ENCODE measurements at regions of chr22 and their contacts with region 1.

Region 1: DNA sequence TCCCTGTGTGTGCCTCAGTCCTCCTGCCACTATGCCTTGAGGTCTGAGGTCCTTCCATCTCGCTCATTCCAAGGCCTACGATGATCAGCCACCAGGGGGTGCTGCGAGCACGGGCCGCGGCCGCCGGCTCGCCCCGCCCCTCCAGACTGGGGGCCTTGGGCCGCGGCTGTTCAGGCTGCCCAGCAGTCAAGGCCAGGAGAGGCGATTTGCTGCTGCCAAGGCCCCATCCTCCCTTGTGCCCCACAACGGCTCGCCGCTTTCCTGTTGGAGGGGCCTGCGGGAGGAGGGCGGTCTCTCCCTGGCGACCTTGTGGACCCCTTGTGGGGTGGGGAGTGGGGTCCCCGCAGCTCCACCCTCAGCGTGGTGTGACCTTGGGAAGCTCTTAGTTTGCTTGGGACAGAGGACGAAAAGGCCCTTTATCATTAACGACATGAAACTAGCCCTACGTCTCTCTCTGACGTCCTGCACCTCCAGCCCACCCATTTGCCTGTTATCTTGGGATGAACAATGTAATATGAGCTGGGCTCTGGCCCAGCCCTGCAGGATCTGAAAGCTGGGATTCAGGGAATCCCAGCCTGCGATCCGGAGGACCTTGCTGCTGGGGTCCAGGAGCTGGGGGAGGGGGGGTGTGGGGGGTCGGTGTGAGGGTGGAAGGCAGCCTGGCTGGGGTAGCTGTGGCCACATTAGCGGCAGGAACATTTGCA is 5.3 kb upstream of the GALR3 start:
- DNase-seq: peak; percentile 98
- H3K4me3 ChIP-seq: peak overlapping the region; percentile 28 to 30; a peak in 3 of 4 replicates
- H3K27ac ChIP-seq: peak overlapping the region; percentile 38 to 73; a peak in 3 of 4 replicates
- H3K4me1 ChIP-seq: peaks cover 0 to 8% of the 10 kb centered on the region in 2 experiments; a peak in 1 of 4 replicates
- H3K27me3 ChIP-seq: no peaks in the 10 kb centered on the region
- CTCF ChIP-seq: peak; percentile 90
- EP300 ChIP-seq: no peak
- RAD21 ChIP-seq: peak; percentile 93

Region 2: GRCh38 chr22:37774728-37775127 is 43.1 kb before region 1 on chr22:
- CTCF ChIA-PET with region 1: no interaction called
- POLR2A ChIA-PET with region 1: no interaction called
- DNase-seq: no peak
- H3K4me3 ChIP-seq: no peak overlapping the region
- H3K27ac ChIP-seq: no peak overlapping the region
- H3K4me1 ChIP-seq: no peaks in the 10 kb centered on the region; a peak in 1 of 4 replicates
- H3K27me3 ChIP-seq: no peaks in the 10 kb centered on the region
- CTCF ChIP-seq: no peak
- EP300 ChIP-seq: no peak
- RAD21 ChIP-seq: no peak

Region 3: DNA sequence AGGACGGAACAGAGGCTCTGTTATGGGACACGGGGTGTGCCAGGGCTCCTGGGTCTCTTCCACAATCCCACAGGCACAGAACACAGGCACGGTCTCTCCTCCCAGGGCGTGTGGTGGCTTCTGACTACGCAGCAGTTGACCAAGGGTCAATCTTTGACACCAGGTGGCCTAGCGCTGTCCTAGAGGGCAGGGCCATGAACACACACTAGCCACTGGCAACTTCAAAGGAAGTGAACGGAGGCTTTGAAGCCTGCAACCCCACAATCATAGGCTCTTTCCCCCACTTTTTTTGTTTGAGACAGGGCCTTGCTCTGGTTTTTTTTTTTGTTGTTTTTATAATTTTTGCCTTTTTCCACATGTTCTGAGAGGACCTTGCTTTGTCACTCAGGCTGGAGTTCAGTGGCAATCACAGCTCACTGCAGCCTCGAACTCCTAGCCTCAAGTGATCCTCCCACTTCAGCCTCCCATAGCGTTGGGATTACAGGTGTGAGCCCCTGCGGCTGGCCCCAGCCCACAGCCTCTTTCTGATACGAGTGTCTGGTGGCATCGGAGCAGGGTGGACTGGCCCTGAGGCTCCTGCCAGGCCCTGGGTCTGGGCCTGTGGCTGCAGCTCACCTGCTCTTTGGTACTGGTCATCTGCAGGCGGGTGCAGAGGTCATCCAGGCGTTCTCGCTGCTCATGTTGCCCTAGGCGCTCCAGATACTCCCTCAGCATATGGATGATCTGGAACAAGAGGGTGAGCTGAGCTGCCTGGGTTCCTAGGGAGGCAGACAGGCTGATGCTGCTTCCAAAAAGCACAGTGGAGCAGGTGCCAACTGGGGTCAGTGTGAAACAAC is 14.4 kb after region 1 on chr22:
- CTCF ChIA-PET with region 1: interaction called, 29 read pairs
- POLR2A ChIA-PET with region 1: interaction called, 5 read pairs
- DNase-seq: no peak
- H3K4me3 ChIP-seq: no peak overlapping the region
- H3K27ac ChIP-seq: no peak overlapping the region
- H3K4me1 ChIP-seq: no peaks in the 10 kb centered on the region
- H3K27me3 ChIP-seq: no peaks in the 10 kb centered on the region
- CTCF ChIP-seq: no peak
- EP300 ChIP-seq: no peak
- RAD21 ChIP-seq: no peak

Region 4: DNA sequence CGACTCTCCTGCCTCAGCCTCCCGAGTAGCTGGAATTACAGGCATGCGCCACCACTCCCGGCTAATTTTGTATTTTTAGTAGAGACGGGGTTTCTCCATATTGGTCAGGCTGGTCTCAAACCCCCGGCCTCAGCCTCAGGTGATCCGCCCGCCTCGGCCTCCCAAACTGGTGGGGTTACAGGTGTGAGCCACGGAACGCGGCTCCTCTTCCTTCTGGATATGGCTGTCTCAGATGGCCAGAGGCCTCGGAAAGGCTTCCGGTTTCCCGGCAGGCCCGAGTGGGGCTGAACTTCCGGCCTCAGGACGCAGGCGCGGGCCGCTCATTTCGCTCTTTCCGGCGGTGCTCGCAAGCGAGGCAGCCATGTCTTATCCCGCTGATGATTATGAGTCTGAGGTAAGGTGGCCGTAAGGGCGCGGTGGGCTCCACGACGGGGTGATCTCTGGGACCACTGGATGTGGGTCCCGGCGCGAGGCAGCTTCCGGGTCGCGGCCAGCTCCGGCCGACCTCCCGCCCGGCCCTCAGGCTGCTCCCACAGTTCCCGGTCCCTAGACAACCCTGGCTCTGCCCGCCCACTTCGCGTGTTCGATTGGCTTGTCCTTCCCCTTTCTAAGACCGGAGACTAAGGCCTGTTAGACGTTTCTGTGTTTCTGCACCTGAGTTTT is 31.4 kb after region 1 on chr22 and contains the start of gene EIF3L:
- CTCF ChIA-PET with region 1: interaction called, 182 read pairs
- POLR2A ChIA-PET with region 1: no interaction called
- DNase-seq: peak; percentile 96
- H3K4me3 ChIP-seq: peak within 1 kb of the TSS; percentile 79 to 98
- H3K27ac ChIP-seq: peak within 1 kb of the TSS; percentile 19 to 89
- H3K4me1 ChIP-seq: peaks cover 11 to 13% of the 10 kb centered on the region in 2 experiments; a peak in 3 of 4 replicates
- H3K27me3 ChIP-seq: no peaks in the 10 kb centered on the region
- CTCF ChIP-seq: no peak
- EP300 ChIP-seq: no peak
- RAD21 ChIP-seq: no peak
- polyA plus RNA-seq, gene EIF3L: 478 and 642 TPM in 2 replicates

Region 5: GRCh38 chr22:37880668-37881440 is 63.0 kb after region 1 on chr22:
- CTCF ChIA-PET with region 1: interaction called, 11 read pairs
- POLR2A ChIA-PET with region 1: no interaction called
- DNase-seq: no peak
- H3K4me3 ChIP-seq: no peak overlapping the region
- H3K27ac ChIP-seq: peak overlapping the region in 1 of 2 experiments; percentile 70; a peak in 2 of 4 replicates
- H3K4me1 ChIP-seq: peaks cover 2 to 10% of the 10 kb centered on the region in 2 experiments; a peak in 3 of 4 replicates
- H3K27me3 ChIP-seq: no peaks in the 10 kb centered on the region
- CTCF ChIP-seq: no peak
- EP300 ChIP-seq: no peak
- RAD21 ChIP-seq: no peak

Region 6: DNA sequence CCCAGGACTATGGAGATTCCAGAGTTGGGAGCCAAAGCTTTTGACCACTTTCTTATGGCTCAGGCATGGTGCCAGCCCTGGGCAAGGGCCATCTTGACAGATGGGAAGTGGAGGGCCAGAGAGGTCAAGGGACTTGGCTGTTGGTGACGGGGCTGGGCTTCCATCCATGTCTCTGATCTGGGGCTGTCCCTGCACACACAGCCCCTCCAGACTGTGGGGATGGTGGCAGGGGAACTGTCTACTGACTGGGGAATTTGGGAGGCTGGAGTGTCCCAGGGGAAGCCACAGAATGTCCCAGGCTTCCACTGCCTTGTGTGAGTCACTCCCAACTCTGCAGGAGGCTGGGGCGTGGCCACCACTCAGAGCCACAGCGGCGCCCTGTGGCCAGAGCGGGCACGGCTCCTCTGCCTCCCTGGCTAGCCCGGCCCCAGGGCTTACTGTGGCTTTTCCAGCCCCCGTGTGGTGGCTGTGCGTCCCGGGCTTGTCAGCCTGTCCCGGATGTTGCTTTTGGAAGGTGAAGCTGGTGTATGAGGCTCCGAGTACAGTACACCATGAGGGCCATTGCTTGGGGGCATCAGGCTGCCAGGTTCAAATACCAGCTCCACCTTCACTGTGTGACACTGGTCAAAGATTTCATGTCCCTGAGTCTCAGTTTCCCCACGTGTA is 116.0 kb after region 1 on chr22:
- CTCF ChIA-PET with region 1: interaction called, 10 read pairs
- POLR2A ChIA-PET with region 1: no interaction called
- DNase-seq: peak; percentile 95
- H3K4me3 ChIP-seq: peak overlapping the region in 1 of 2 experiments; percentile 8; a peak in 1 of 4 replicates
- H3K27ac ChIP-seq: peak overlapping the region in 1 of 2 experiments; percentile 69; a peak in 3 of 4 replicates
- H3K4me1 ChIP-seq: peaks cover 6 to 7% of the 10 kb centered on the region in 2 experiments; a peak in 3 of 4 replicates
- H3K27me3 ChIP-seq: no peaks in the 10 kb centered on the region
- CTCF ChIP-seq: peak; percentile 93
- EP300 ChIP-seq: no peak; a peak in 1 of 4 replicates
- RAD21 ChIP-seq: peak; percentile 64